Activated CD4-positive, alpha-beta T cell treated with anti-CD3 and anti-CD28 coated beads, Interleukin-2, amount 10 ng/mL, durations not matched to agents 24 days and 14 days (primary cell): ENCODE measurements at regions of chr6 and their contacts with region 1.

Region 1: DNA sequence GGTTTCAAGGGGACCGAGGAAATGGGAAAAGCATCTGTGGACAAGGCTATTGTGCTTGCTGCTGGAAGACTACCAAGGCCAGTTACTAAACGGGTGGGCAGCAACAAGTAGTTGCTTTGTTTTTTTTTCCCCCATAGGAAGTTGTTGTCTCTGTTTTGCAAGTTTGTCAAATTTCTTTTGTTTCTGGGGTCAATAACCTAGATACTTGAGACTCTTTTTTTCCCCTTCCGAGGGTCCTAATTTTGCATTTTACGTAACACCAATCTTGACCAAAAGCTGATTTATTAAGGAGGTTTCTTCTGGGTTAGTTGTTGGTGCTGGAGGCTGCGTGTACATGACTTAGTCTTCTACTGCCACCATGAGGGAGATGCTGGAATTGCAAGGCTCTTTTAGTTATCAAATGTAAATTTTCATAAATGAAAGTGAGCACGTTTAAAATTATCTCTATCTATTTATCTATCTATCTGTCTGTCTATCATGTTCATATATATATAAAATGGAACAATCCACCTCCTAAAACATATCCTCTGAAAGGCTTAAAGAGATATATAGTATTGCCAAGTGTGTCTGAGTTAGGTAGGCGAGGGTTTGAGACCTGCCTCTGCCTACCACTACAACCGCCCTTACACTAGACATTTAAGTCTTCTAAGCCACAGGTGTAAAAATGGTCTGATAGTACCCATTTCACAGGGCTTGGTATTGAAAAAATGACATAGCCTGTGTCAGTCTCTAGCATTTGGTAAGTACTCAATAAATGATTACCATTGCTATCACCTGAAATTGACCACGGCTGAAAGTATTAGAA is 60.2 kb downstream of the GCLC start:
- DNase-seq: peak; percentile 91
- H3K4me3 Mint-ChIP-seq: no peak overlapping the region
- H3K27ac Mint-ChIP-seq: no peak overlapping the region
- H3K4me1 Mint-ChIP-seq: peaks cover 18% of the 10 kb centered on the region
- H3K27me3 Mint-ChIP-seq: peaks cover 33% of the 10 kb centered on the region

Region 2: DNA sequence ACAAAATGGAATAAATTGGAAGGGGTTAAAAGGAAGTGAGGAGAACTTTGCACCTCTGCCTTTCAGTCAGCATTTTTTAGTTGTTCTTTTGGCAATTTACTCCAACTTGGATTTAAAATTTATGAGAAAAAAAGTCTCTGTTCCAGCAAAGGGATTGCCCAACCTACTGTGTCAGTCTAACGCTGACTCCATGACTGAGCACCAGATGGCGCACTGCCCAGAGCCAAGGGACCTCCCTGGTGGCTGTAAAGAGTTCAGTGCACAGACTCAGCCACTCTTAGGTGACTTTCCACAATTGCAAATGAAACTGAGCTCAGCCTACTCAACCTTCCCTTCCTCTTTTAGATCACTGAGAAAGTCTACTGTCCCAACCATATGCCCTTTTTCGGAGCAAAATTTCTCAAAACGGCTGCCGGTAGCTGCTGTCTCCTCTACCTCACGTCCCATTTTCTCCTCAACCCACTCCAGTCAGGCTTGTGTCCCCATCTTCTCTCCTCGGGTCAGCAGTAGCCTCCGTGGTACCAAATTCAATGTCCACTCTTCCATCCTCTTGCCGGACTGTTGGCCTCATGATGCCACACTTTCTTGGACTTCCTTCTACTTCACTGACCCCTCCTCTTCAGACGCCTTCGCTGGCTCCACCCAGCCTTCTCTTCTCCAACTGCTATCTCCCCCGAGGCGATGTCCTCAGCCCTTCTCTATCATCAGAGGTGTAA is 760.1 kb before region 1 on chr6:
- intact Hi-C with region 1: loop called (anchors 10 kb)
- DNase-seq: peak; percentile 84
- H3K4me3 Mint-ChIP-seq: no peak overlapping the region
- H3K27ac Mint-ChIP-seq: no peak overlapping the region
- H3K4me1 Mint-ChIP-seq: no peaks in the 10 kb centered on the region
- H3K27me3 Mint-ChIP-seq: peaks cover 4% of the 10 kb centered on the region

Region 3: GRCh38 chr6:52815167-52816092 is 669.2 kb before region 1 on chr6:
- intact Hi-C with region 1: loop called (anchors 10 kb)
- DNase-seq: peak; percentile 81
- H3K4me3 Mint-ChIP-seq: no peak overlapping the region
- H3K27ac Mint-ChIP-seq: peak overlapping the region; percentile 1
- H3K4me1 Mint-ChIP-seq: peaks cover 2% of the 10 kb centered on the region
- H3K27me3 Mint-ChIP-seq: no peaks in the 10 kb centered on the region

Region 4: GRCh38 chr6:53086302-53086701 is 398.4 kb before region 1 on chr6:
- intact Hi-C with region 1: loop called (anchors 5 kb)
- DNase-seq: no peak
- H3K4me3 Mint-ChIP-seq: no peak overlapping the region
- H3K27ac Mint-ChIP-seq: no peak overlapping the region
- H3K4me1 Mint-ChIP-seq: no peaks in the 10 kb centered on the region
- H3K27me3 Mint-ChIP-seq: no peaks in the 10 kb centered on the region

Region 5: GRCh38 chr6:53410508-53411258 is 74.0 kb before region 1 on chr6:
- intact Hi-C with region 1: loop called (anchors 1 kb)
- DNase-seq: peak; percentile 85
- H3K4me3 Mint-ChIP-seq: no peak overlapping the region
- H3K27ac Mint-ChIP-seq: no peak overlapping the region
- H3K4me1 Mint-ChIP-seq: no peaks in the 10 kb centered on the region
- H3K27me3 Mint-ChIP-seq: peaks cover 3% of the 10 kb centered on the region

Region 6: GRCh38 chr6:53437557-53438202 is 47.0 kb before region 1 on chr6:
- intact Hi-C with region 1: loop called (anchors 2 kb)
- DNase-seq: peak; percentile 65
- H3K4me3 Mint-ChIP-seq: no peak overlapping the region
- H3K27ac Mint-ChIP-seq: no peak overlapping the region
- H3K4me1 Mint-ChIP-seq: peaks cover 10% of the 10 kb centered on the region
- H3K27me3 Mint-ChIP-seq: peaks cover 3% of the 10 kb centered on the region